ENCODE measurements at regions of chr12 and their contacts with region 1.

Region 1: DNA sequence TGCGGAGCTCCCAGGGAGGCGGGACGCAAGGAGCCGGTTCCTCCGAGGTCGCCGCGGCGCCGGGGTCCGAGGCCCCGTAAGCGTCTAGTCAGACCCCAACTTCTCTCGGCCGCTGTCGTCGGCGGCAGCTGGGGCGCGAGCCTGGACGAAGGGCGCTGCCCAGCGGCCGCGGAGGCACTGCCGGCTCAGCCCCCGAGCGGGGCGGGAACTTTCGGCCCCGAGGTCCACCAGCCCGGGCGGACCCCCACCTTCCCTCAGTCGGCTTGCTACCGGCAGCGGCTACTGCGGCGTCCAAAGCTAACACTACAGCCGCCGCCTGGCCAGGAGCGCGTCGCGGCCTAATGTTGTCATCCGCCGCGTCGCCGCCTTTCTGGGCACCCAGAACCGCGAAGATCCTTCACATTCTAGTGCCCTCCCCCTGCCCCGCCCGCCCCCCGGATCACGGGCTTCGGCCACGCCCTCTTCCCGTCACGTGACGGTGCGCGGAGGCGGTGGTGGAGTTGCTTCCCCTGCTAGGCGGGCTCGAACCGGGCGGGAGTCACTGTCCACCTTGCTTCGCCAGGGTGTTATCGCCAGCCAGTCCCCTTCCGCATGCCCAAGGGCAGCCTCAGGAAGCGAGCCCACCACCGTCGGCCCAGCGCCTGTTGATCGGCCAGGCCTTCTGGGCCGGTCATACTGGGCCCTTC is at the start of gene OSBPL8:
- DNase-seq: peak; percentile 90 to 98 (median 96)
- ATAC-seq: peak; percentile 58
- H3K4me3 ChIP-seq: peak within 1 kb of the TSS; percentile 88
- H3K4me3 Mint-ChIP-seq: peak within 1 kb of the TSS; percentile 94
- H3K27ac ChIP-seq: peak within 1 kb of the TSS; percentile 85 to 99
- H3K27ac Mint-ChIP-seq: peak within 1 kb of the TSS; percentile 95
- H3K4me1 ChIP-seq: peaks cover 16% of the 10 kb centered on the region
- H3K4me1 Mint-ChIP-seq: peaks cover 46% of the 10 kb centered on the region
- H3K27me3 ChIP-seq: no peaks in the 10 kb centered on the region
- H3K27me3 Mint-ChIP-seq: no peaks in the 10 kb centered on the region
- CTCF ChIP-seq: no peak
- total RNA-seq, gene OSBPL8: 154 to 160 TPM

Region 2: GRCh38 chr12:75505706-75506312 is 1053.7 kb before region 1 on chr12:
- CTCF ChIA-PET with region 1: no interaction called
- POLR2A ChIA-PET with region 1: no interaction called
- intact Hi-C with region 1: loop called in 1 of 2 experiments (anchors 10 kb)
- DNase-seq: peak in 3 of 14 experiments; percentile 42 to 57 (median 56)
- ATAC-seq: peak; percentile 69
- H3K4me3 ChIP-seq: no peak overlapping the region
- H3K4me3 Mint-ChIP-seq: no peak overlapping the region
- H3K27ac ChIP-seq: no peak overlapping the region
- H3K27ac Mint-ChIP-seq: peak overlapping the region; percentile 31
- H3K4me1 ChIP-seq: peaks cover 5% of the 10 kb centered on the region
- H3K4me1 Mint-ChIP-seq: peaks cover 28% of the 10 kb centered on the region
- H3K27me3 ChIP-seq: no peaks in the 10 kb centered on the region
- H3K27me3 Mint-ChIP-seq: no peaks in the 10 kb centered on the region
- CTCF ChIP-seq: peak; percentile 72

Region 3: DNA sequence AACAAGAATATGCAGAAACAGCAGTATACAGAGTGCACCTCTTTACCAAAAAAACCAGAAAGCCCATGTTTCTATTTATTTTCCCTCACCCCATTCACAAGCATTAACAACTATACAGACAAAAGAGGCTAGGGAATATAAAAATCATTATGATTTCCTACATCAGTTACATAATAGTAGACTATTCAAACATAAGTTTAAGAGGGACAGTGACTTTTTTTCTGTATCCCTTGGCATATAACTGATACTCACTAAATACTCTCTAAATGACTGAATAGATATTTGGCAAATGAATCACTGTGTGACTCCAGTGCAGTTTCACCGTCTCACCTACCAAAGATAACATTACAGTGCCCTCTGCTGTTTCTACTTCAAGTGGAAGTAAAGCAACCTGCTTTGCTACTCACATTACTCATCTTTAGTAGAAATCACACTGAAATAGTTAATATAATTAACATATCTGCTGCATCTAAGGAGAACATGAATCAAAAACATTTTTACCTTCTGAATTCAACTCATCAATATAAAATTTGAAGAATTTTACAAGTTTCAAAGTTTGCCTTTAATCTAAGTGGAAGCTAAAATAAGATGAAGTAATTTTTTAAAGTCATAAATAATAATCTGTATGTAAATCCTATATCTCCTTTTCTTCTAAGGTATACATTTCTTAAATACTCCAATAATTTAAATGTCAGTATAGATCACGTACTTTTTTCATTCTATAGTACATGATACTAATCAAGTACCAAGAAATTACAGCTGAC is 103.8 kb before region 1 on chr12:
- CTCF ChIA-PET with region 1: interaction called, 3 read pairs
- POLR2A ChIA-PET with region 1: interaction called, 39 read pairs
- intact Hi-C with region 1: loop called in 1 of 2 experiments (anchors 5 kb)
- DNase-seq: peak in 6 of 14 experiments; percentile 2 to 69 (median 40)
- ATAC-seq: peak; percentile 72
- H3K4me3 ChIP-seq: no peak overlapping the region
- H3K4me3 Mint-ChIP-seq: no peak overlapping the region
- H3K27ac ChIP-seq: no peak overlapping the region
- H3K27ac Mint-ChIP-seq: peak overlapping the region; percentile 84
- H3K4me1 ChIP-seq: peaks cover 14% of the 10 kb centered on the region
- H3K4me1 Mint-ChIP-seq: peaks cover 68% of the 10 kb centered on the region
- H3K27me3 ChIP-seq: no peaks in the 10 kb centered on the region
- H3K27me3 Mint-ChIP-seq: no peaks in the 10 kb centered on the region
- CTCF ChIP-seq: peak; percentile 71

Region 4: DNA sequence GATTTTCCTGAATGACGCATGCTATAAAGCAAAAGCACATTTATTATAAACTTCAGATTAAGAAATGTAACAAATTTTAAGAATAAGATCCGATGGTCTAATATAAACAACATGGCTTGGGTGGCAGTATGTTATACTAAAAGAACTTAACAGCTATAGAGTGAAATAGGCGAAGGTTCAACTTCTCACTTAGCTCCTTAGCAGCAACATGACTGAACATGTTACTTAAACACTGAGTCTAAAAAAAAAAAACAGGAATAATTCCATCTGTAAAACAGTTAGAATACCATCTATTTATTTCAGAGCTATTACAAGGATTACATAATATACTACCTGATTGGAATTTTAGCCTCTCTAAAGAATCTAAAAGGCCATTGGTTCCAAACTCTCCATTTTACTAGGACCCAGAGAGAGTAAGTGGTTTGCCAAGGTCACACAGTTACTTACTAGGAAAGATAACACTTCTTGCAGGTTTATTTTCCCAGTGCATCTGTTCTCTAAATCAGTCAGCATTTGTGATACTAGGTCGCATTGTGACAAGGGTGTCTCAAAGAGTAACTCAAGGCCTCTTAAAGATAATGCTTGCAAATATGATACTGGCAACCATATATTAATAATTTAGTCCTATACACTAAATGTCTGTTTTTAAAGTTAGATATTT is 14.8 kb before region 1 on chr12:
- CTCF ChIA-PET with region 1: interaction called, 5 read pairs
- POLR2A ChIA-PET with region 1: interaction called, 9 read pairs
- intact Hi-C with region 1: loop called in 1 of 2 experiments (anchors 1 kb)
- DNase-seq: no peak
- ATAC-seq: no peak
- H3K4me3 ChIP-seq: no peak overlapping the region
- H3K4me3 Mint-ChIP-seq: no peak overlapping the region
- H3K27ac ChIP-seq: no peak overlapping the region
- H3K27ac Mint-ChIP-seq: no peak overlapping the region
- H3K4me1 ChIP-seq: peaks cover 7% of the 10 kb centered on the region
- H3K4me1 Mint-ChIP-seq: peaks cover 90% of the 10 kb centered on the region
- H3K27me3 ChIP-seq: no peaks in the 10 kb centered on the region
- H3K27me3 Mint-ChIP-seq: no peaks in the 10 kb centered on the region
- CTCF ChIP-seq: no peak

Region 5: GRCh38 chr12:76649099-76649498 is 89.6 kb after region 1 on chr12:
- CTCF ChIA-PET with region 1: no interaction called
- POLR2A ChIA-PET with region 1: no interaction called
- intact Hi-C with region 1: no loop called
- DNase-seq: no peak
- ATAC-seq: no peak
- H3K4me3 ChIP-seq: no peak overlapping the region
- H3K4me3 Mint-ChIP-seq: no peak overlapping the region
- H3K27ac ChIP-seq: no peak overlapping the region
- H3K27ac Mint-ChIP-seq: no peak overlapping the region
- H3K4me1 ChIP-seq: no peaks in the 10 kb centered on the region
- H3K4me1 Mint-ChIP-seq: no peaks in the 10 kb centered on the region
- H3K27me3 ChIP-seq: no peaks in the 10 kb centered on the region
- H3K27me3 Mint-ChIP-seq: peaks cover 6% of the 10 kb centered on the region
- CTCF ChIP-seq: no peak

Region 6: DNA sequence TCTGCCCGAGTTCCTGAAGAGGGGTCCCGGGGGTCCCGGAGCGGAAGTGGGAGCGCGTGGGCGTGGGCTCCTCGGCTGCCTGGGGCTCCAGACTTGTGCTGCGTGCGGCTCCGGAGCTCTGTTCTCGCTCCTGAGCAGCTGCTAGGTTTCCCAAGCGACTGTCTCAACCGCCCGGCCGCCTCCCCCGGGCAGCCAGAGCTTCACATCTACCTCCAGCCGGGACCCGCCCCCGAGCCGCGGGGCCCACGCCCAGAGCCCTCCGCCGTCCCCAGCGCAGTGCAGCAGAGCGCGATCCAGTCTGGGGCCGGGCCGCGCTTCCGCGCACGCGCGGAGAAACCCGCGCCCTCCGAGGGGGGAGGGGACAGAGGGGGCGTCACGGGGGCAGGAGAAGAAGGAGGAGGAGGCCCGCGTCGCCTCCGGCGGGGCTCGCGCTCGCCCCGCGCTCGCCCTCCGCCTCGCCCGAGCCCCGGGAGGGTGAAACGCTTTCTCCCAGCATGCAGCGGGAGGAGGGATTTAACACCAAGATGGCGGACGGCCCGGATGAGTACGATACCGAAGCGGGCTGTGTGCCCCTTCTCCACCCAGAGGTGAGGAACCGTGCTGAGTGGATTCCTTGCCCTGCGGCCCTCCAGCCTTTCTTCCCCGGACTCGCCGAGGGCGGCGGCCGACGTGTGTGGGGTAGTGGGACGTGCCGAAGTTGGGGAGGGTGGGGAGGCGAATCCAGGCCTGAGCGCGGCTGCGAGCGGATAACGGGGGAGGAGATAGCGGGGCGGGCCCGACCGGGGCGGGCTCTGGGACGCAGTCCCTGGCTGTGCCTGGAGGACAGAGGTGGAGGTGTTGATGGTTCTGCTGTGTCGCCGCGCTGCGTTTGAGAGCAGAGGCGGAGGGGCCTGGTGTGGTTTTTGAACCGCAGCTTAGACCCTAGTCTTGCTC is 204.5 kb after region 1 on chr12 and contains the start of gene ZDHHC17:
- CTCF ChIA-PET with region 1: interaction called, 4 read pairs
- POLR2A ChIA-PET with region 1: interaction called, 18 read pairs
- intact Hi-C with region 1: loop called (anchors 2 to 5 kb)
- DNase-seq: peak; percentile 86 to 96 (median 92)
- ATAC-seq: peak; percentile 81
- H3K4me3 ChIP-seq: peak within 1 kb of the TSS; percentile 95
- H3K4me3 Mint-ChIP-seq: peak within 1 kb of the TSS; percentile 99
- H3K27ac ChIP-seq: peak within 1 kb of the TSS; percentile 85 to 95
- H3K27ac Mint-ChIP-seq: peak within 1 kb of the TSS; percentile 99
- H3K4me1 ChIP-seq: peaks cover 29% of the 10 kb centered on the region
- H3K4me1 Mint-ChIP-seq: peaks cover 60% of the 10 kb centered on the region
- H3K27me3 ChIP-seq: no peaks in the 10 kb centered on the region
- H3K27me3 Mint-ChIP-seq: no peaks in the 10 kb centered on the region
- CTCF ChIP-seq: no peak
- total RNA-seq, gene ZDHHC17: 36.4 to 42.6 TPM

Measured in CD4-positive, alpha-beta T cell (primary cell).